Activated CD4-positive, alpha-beta memory T cell treated with anti-CD3 and anti-CD28 coated beads for 36 hours (primary cell): ENCODE measurements at regions of chr5 and their contacts with region 1.

Region 1: GRCh38 chr5:141691867-141692532 is 10.0 kb upstream of the ARAP3 start:
- DNase-seq: peak; percentile 93
- H3K4me3 Mint-ChIP-seq: peak overlapping the region; percentile 46
- H3K27ac Mint-ChIP-seq: no peak overlapping the region
- H3K4me1 Mint-ChIP-seq: peaks cover 25% of the 10 kb centered on the region
- H3K27me3 Mint-ChIP-seq: no peaks in the 10 kb centered on the region

Region 2: GRCh38 chr5:140785905-140786686 is 905.9 kb before region 1 on chr5 and contains the start of gene PCDHA1:
- CTCF ChIA-PET with region 1: no interaction called
- POLR2A ChIA-PET with region 1: no interaction called
- intact Hi-C with region 1: no loop called
- DNase-seq: no peak
- H3K4me3 Mint-ChIP-seq: no peak within 1 kb of the TSS
- H3K27ac Mint-ChIP-seq: no peak within 1 kb of the TSS
- H3K4me1 Mint-ChIP-seq: no peaks in the 10 kb centered on the region
- H3K27me3 Mint-ChIP-seq: peaks cover 24% of the 10 kb centered on the region
- total RNA-seq, gene PCDHA1: not detected

Region 3: DNA sequence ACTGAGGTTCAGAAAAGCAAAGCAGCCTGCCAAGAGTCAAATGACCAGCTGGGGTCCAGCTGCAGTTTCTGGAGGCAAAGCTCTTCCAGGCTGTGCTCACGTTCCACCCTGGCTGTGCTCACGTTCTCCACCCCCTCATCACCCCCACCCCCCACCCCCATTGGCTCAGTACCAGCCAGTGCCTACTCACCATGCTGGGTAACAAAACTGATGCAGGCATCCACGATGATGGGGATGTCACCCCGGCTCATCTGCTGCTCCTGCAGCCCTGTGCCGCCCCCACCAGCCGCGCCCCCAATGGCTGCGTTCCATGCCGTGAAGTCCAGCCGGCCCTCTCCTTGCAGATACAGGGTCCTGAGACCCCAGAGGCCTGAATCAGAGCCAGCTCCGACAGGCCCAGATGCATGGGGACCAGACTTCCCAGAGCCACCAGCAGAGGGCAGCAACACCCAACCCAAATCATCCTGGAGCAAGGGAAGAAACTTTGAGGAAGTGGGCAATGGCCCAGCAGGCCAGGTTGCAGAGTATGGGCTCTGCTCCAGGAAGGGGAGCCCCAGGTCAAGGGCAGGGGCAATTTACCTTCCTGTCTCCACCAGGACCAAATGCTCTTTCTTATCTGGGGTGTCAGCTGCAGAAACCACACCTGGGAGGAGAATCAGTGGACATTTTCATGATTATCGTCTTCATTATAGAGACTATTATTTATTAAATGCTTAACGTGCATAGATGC is 27.1 kb before region 1 on chr5:
- CTCF ChIA-PET with region 1: interaction called, 25 read pairs
- POLR2A ChIA-PET with region 1: interaction called, 4 read pairs
- intact Hi-C with region 1: loop called (anchors 1 kb)
- DNase-seq: peak; percentile 85
- H3K4me3 Mint-ChIP-seq: no peak overlapping the region
- H3K27ac Mint-ChIP-seq: no peak overlapping the region
- H3K4me1 Mint-ChIP-seq: peaks cover 4% of the 10 kb centered on the region
- H3K27me3 Mint-ChIP-seq: no peaks in the 10 kb centered on the region

Region 4: DNA sequence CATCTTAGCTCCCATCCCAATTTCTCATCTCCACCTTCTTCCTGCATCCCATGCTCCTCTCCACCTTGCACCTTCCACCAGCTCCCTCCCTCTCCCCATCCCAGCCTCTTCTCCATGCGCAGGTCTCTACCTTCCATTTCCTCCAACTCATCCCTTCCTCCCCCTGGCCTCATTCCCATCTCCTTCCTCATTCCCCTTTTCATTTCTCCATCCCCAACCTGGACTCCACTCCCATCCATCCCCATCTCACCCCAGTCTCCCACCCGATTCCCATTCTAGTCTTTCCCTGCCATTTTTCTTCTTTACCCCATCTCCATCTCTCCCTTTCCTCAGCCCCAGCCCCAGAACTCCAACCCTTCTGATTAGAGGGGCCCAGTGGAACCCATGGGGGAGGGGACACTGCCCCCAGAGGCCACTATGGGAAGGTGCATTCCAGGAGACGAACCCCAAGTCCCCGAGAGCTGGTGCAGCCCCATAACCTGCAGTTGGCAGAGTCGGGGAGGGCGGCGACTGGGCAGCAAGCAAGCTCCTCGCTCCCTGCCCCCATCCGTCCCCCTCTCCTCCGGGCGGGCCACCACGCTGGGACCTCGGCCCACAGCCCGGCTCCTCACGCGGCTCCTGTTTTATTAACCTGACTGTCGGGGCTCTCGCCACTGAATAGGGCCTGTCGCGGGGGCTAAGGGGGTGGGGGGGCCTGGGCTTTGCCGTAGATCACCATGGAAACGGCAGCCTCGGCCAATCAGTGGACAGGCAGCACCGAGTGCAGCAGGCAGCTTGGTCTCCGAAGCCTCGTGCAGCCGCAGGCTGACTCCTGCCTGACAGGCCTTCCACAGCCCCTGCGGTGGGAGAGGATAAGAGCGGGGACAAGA is 119.5 kb after region 1 on chr5:
- CTCF ChIA-PET with region 1: interaction called, 93 read pairs
- POLR2A ChIA-PET with region 1: no interaction called
- intact Hi-C with region 1: loop called (anchors 2 kb)
- DNase-seq: peak; percentile 31
- H3K4me3 Mint-ChIP-seq: no peak overlapping the region
- H3K27ac Mint-ChIP-seq: no peak overlapping the region
- H3K4me1 Mint-ChIP-seq: no peaks in the 10 kb centered on the region
- H3K27me3 Mint-ChIP-seq: peaks cover 42% of the 10 kb centered on the region

Region 5: DNA sequence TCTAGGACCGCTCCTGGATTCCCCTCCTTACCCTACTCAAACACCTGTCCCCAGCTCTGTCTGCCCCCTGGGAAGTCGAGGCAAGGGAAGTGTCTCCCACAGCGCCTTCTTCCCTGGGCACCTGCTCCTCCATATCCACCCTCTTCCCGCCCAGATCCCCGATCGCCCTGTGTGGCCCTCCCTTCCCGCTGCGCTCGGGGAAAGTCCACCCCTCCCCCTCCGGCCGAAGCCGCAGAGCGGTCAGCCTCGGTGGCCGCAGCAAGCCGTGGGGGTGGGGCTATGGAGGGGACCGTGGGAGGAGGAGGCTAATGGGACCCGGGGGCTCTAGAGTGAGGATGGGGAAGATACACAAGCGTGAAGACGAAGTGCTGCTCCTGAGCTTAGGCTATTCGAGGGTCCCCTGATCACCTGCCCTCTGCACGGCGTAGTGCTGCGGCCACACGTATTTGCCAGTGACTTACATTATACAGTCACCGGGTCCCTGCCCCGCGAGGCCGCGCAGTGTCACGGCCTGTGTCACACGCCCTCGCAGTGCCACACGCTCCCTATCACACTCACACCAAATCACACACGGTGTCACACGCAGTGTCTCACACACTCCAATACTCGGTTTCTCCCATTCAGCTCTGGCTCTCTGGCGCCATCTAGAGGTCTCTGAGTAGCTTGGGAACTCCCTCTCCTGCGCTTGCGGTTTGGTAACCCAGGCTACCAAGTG is 186.9 kb after region 1 on chr5:
- CTCF ChIA-PET with region 1: interaction called, 263 read pairs
- POLR2A ChIA-PET with region 1: interaction called, 19 read pairs
- intact Hi-C with region 1: loop called (anchors 1 kb)
- DNase-seq: peak; percentile 92
- H3K4me3 Mint-ChIP-seq: peak overlapping the region; percentile 59
- H3K27ac Mint-ChIP-seq: no peak overlapping the region
- H3K4me1 Mint-ChIP-seq: peaks cover 22% of the 10 kb centered on the region
- H3K27me3 Mint-ChIP-seq: peaks cover 73% of the 10 kb centered on the region

Region 6: DNA sequence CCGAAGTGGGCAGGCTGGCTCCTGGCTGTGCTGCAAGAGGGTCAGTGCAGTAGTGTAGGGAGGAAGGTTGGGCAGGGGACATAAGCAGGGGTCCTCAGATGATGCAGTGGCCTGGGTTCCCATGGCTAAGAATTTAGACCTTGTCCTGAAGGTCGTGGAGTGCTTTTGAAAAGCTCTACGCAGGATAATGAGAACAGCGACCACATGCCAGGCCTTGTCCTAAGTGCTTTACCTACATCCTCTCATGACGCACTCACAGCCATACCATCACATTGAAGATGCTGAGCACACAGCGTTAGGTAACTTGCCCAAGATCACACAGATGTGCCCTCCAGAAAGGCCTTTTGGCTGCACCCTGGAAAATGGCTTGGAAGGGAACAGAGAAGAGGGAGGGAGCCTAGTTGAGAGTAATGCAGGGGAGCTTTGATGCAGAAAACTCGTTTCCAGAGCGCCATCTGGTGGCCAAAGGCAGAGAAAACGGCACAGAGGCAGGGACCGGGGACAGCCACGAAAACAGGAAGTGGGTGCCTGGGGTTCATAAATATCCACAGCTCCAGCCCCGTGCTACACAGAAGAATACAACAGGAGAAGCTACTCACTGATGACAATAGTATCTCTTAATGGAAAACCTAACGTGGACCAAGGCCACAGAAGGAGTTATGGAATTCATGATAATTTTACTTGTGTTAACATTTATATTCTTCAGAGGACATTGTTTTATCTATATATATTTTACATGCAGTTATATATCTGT is 268.6 kb after region 1 on chr5:
- CTCF ChIA-PET with region 1: interaction called, 277 read pairs
- POLR2A ChIA-PET with region 1: interaction called, 21 read pairs
- intact Hi-C with region 1: loop called (anchors 1 kb)
- DNase-seq: peak; percentile 95
- H3K4me3 Mint-ChIP-seq: no peak overlapping the region
- H3K27ac Mint-ChIP-seq: peak overlapping the region; percentile 71
- H3K4me1 Mint-ChIP-seq: peaks cover 39% of the 10 kb centered on the region
- H3K27me3 Mint-ChIP-seq: no peaks in the 10 kb centered on the region

Region 7: GRCh38 chr5:142145106-142145900 is 453.3 kb after region 1 on chr5:
- CTCF ChIA-PET with region 1: interaction called, 8 read pairs
- POLR2A ChIA-PET with region 1: no interaction called
- intact Hi-C with region 1: loop called (anchors 2 kb)
- DNase-seq: peak; percentile 67
- H3K4me3 Mint-ChIP-seq: no peak overlapping the region
- H3K27ac Mint-ChIP-seq: no peak overlapping the region
- H3K4me1 Mint-ChIP-seq: peaks cover 2% of the 10 kb centered on the region
- H3K27me3 Mint-ChIP-seq: no peaks in the 10 kb centered on the region